Left colon (tissue), 2 donors: ENCODE measurements at regions of chr18 and their contacts with region 1.

Region 1: DNA sequence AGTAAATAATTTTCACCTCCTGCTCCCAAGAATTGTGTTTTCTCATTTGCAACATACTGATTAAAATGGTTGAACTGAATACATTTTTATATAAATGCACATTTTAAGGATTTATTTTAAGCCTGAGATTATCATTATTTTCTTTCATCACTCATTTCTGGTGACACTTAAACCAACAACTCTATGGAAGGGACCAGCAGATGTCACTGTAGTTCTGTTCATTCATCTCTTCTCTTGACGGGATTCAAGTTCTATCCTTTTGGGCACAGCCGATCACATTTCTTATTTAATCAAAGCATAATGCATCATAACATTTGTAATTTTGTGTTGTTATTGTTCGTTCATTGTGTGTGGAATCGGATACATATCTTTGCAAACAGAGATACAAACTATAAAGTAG is 417.9 kb downstream of the HRH4 start:
- DNase-seq: no peak
- ATAC-seq: peak; percentile 72

Region 2: GRCh38 chr18:24585996-24586566 is 292.2 kb before region 1 on chr18:
- intact Hi-C with region 1: no loop called
- DNase-seq: no peak
- ATAC-seq: no peak

Region 3: DNA sequence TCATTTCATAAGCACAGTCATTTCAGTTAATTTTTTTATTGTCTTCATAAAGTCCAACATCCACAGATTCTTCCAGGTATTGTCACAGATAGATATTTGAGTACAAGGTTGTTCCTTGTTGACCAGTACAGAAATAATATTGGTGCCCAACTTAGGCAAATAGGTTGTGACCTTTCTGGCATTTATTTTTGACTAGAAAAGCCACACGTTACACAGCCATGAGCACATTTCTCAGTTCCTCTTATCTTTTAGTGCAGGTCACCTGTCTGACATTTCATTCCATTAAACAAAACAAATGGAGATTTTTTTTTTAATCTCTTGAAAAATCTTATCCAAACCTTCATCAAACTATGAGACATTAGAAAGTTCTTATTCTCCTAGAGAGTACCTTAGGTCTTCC is 44.8 kb after region 1 on chr18:
- intact Hi-C with region 1: no loop called
- DNase-seq: no peak
- ATAC-seq: no peak

Region 4: DNA sequence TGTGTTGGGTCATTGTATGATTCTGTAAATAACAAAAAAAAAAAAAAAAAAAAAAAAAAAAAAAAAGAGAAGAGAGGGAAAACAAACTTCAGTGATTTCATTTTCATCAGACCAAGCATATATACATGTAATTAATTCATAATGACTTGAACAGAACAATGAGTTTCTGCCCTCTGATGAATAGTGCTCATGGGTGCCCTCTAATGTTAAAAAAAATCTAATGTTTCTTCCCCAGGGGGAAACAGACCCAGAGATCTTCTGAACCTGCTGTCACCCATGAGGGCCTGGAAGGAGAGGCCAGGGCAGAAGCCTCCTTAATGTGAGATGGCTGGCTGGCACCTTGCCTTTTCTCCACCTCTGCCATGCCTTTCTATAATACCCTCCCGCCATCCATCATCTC is 184.4 kb after region 1 on chr18:
- intact Hi-C with region 1: no loop called
- DNase-seq: no peak
- ATAC-seq: no peak

Region 5: DNA sequence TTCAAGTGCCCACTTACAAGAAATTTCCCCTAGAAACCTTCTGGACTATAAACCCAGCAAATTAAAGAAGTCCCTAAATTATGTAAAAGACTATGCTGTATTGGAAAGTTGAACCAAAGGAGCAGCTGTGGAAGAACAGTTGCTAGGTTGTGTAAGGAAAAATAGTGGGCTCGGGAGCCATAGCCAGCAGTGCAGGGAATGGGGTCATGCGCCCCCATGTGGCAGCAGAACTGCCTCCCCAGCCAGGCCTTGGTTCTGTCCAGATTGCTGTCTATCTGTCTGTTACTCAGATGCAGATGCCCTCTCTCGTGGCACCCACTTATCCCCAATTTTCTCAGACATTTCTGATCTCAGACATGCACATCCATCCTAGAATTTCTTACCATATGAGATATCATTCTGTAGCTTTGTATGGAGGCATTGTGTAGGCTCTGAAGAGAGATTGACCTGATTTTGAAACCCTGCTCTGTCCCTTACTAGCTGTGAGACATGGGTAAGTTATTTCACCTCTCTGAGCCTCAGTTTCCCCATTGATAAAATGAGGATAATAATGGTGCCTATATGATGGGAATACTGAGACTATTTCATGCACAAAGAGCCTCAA is 953.8 kb after region 1 on chr18:
- intact Hi-C with region 1: loop called in 1 of 2 experiments (anchors 5 kb)
- DNase-seq: peak in 1 of 2 donors; percentile 71
- ATAC-seq: peak; percentile 70